Psoas muscle (tissue), 8 donors: ENCODE measurements at regions of chr3 and their contacts with region 1.

Region 1: GRCh38 chr3:100254168-100254777 is 6.5 kb upstream of the TBC1D23 start:
- DNase-seq: peak in 1 of 2 donors; percentile 23
- ATAC-seq: peak; percentile 85 to 93 (median 88)
- H3K4me3 ChIP-seq: no peak overlapping the region
- H3K27ac ChIP-seq: peak overlapping the region; percentile 64
- H3K4me1 ChIP-seq: peaks cover 36% of the 10 kb centered on the region
- H3K27me3 ChIP-seq: no peaks in the 10 kb centered on the region
- CTCF ChIP-seq: peak; percentile 82

Region 2: GRCh38 chr3:99833617-99834205 is 420.6 kb before region 1 on chr3:
- intact Hi-C with region 1: loop called (anchors 1 to 5 kb)
- DNase-seq: no peak
- ATAC-seq: no peak
- H3K4me3 ChIP-seq: no peak overlapping the region
- H3K27ac ChIP-seq: peak overlapping the region; percentile 50
- H3K4me1 ChIP-seq: peaks cover 10% of the 10 kb centered on the region
- H3K27me3 ChIP-seq: no peaks in the 10 kb centered on the region
- CTCF ChIP-seq: no peak

Region 3: GRCh38 chr3:100068826-100069225 is 185.4 kb before region 1 on chr3:
- intact Hi-C with region 1: loop called (anchors 2 to 5 kb)
- DNase-seq: peak; percentile 77 to 88
- ATAC-seq: peak; percentile 80 to 91 (median 88)
- H3K4me3 ChIP-seq: no peak overlapping the region
- H3K27ac ChIP-seq: peak overlapping the region; percentile 80
- H3K4me1 ChIP-seq: peaks cover 47% of the 10 kb centered on the region
- H3K27me3 ChIP-seq: no peaks in the 10 kb centered on the region
- CTCF ChIP-seq: peak; percentile 68

Region 4: GRCh38 chr3:100073899-100074307 is 180.4 kb before region 1 on chr3:
- intact Hi-C with region 1: loop called (anchors 2 to 5 kb)
- DNase-seq: no peak
- ATAC-seq: no peak
- H3K4me3 ChIP-seq: no peak overlapping the region
- H3K27ac ChIP-seq: peak overlapping the region; percentile 80
- H3K4me1 ChIP-seq: peaks cover 69% of the 10 kb centered on the region
- H3K27me3 ChIP-seq: no peaks in the 10 kb centered on the region
- CTCF ChIP-seq: no peak

Region 5: GRCh38 chr3:100113723-100114412 is 140.4 kb before region 1 on chr3:
- intact Hi-C with region 1: loop called in 1 of 2 experiments (anchors 5 kb)
- DNase-seq: no peak
- ATAC-seq: peak; percentile 14 to 72 (median 54)
- H3K4me3 ChIP-seq: peak overlapping the region; percentile 71
- H3K27ac ChIP-seq: peak overlapping the region; percentile 90
- H3K4me1 ChIP-seq: no peaks in the 10 kb centered on the region
- H3K27me3 ChIP-seq: no peaks in the 10 kb centered on the region
- CTCF ChIP-seq: no peak

Region 6: DNA sequence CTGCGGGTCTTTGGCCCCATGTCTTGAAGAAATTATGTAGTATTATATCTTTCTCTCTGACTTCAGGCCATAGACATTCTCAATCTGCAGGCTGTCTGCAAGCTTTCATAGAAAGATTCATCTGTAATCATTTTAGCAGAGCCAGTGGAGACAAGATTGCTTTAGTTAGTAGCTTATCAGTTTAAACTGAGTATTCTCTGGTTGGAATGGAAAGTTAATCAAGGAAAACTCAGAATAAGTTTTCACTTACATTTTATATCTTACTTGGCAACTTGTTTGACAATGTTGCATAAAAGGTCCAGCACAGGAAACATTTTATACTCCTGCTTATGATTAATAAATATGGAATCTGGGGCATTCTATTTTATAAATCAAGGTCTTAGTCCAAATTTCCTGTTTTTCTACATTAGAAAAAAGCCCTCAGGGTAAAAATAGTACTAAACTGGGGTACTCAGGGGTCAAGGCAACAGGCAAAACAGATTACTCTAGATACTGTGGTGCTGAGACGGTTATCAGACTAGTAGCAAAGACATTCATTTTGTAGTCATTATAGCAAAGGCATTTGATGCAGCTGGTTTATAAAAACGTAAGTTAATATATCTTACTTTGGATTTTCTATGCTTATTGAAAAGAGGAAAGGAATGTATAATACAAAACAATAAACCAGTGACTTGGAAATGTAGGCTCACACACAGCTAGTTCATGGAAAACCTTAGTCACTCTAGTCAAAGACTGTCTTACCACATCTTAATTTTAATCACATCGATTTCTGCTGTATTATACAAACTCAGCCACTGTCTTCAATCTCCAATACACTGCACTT is 94.7 kb before region 1 on chr3:
- intact Hi-C with region 1: loop called in 1 of 2 experiments (anchors 2 kb)
- DNase-seq: no peak
- ATAC-seq: peak in 2 of 4 donors; percentile 26 to 30
- H3K4me3 ChIP-seq: peak overlapping the region; percentile 37
- H3K27ac ChIP-seq: peak overlapping the region; percentile 84
- H3K4me1 ChIP-seq: peaks cover 55% of the 10 kb centered on the region
- H3K27me3 ChIP-seq: no peaks in the 10 kb centered on the region
- CTCF ChIP-seq: no peak

Region 7: GRCh38 chr3:100184948-100185570 is 69.2 kb before region 1 on chr3:
- intact Hi-C with region 1: loop called in 1 of 2 experiments (anchors 5 kb)
- DNase-seq: no peak
- ATAC-seq: peak in 1 of 4 donors; percentile 45
- H3K4me3 ChIP-seq: no peak overlapping the region
- H3K27ac ChIP-seq: no peak overlapping the region
- H3K4me1 ChIP-seq: peaks cover 6% of the 10 kb centered on the region
- H3K27me3 ChIP-seq: no peaks in the 10 kb centered on the region
- CTCF ChIP-seq: no peak